ENCODE measurements at regions of chr2 and their contacts with region 1.

Region 1: DNA sequence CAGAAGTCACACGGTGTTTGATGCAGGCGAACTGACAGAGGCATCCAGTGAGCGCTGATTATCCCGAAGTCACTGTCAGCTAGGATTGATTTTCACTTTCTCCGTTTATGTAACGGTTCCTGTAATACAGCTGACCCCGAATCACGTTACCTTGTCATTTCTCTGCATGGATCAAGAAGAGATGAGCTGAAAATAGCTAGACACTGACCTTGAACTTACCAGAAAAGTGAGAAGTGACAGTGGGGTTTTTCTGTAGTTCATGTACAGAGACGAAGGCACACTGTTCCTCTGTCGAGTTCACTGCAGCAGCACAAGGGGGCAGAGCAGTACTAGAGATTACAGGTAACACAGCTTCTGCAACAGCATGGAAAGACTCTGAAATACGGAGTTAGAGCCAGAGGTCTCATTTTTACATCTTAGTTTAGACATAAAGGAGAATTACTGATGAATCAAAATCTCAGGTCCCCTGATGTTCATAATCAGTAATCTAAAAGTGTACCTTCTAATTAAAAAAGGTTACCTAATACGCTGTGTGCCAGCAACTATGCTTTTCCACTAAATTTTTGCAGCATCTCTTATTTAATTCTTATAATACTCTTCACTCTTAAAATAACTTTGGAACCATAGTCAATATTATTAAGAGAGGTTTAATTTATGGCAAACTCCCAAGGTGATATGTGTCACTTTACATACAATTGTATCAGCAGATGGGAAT is 33.1 kb downstream of the ARHGAP15 start:
- DNase-seq: no peak
- H3K4me3 ChIP-seq: no peak overlapping the region
- H3K27ac ChIP-seq: no peak overlapping the region
- H3K4me1 ChIP-seq: no peaks in the 10 kb centered on the region
- H3K27me3 ChIP-seq: no peaks in the 10 kb centered on the region
- CTCF ChIP-seq: peak; percentile 63 to 86 (median 83)
- EP300 ChIP-seq: no peak
- POLR2A ChIP-seq: no peak
- RAD21 ChIP-seq: peak; percentile 92 to 93

Region 2: GRCh38 chr2:143148757-143149156 is 13.5 kb before region 1 on chr2:
- CTCF ChIA-PET with region 1: interaction called, 10 read pairs
- POLR2A ChIA-PET with region 1: no interaction called
- DNase-seq: no peak
- H3K4me3 ChIP-seq: no peak overlapping the region
- H3K27ac ChIP-seq: no peak overlapping the region
- H3K4me1 ChIP-seq: no peaks in the 10 kb centered on the region
- H3K27me3 ChIP-seq: no peaks in the 10 kb centered on the region
- CTCF ChIP-seq: no peak
- EP300 ChIP-seq: no peak
- POLR2A ChIP-seq: no peak
- RAD21 ChIP-seq: no peak

Region 3: GRCh38 chr2:143217512-143218115 is 55.3 kb after region 1 on chr2:
- CTCF ChIA-PET with region 1: interaction called, 14 read pairs
- POLR2A ChIA-PET with region 1: no interaction called
- DNase-seq: no peak
- H3K4me3 ChIP-seq: no peak overlapping the region
- H3K27ac ChIP-seq: no peak overlapping the region
- H3K4me1 ChIP-seq: no peaks in the 10 kb centered on the region
- H3K27me3 ChIP-seq: no peaks in the 10 kb centered on the region
- CTCF ChIP-seq: no peak
- EP300 ChIP-seq: no peak
- POLR2A ChIP-seq: no peak
- RAD21 ChIP-seq: no peak

Region 4: DNA sequence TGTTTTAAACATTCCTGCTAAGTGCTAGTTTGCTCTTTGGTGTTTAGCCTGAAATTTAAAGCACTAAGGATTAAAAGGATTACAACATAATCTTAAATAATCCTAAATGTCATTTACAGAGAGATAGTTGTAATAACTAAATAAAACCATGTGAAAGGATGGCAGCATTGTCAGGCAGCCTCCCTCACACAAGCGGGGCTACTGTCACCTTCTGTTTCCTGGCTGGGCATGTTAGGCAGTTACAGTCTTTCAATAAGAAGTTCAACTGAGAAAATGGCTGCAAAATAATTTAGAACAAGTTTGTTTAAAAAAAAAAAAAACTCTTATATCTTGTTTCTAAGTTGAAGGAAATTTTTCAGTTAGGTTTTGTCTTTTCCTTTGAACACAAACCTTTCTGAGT is 91.8 kb after region 1 on chr2:
- CTCF ChIA-PET with region 1: interaction called, 164 read pairs
- POLR2A ChIA-PET with region 1: interaction called, 3 read pairs
- DNase-seq: no peak
- H3K4me3 ChIP-seq: no peak overlapping the region
- H3K27ac ChIP-seq: no peak overlapping the region
- H3K4me1 ChIP-seq: peaks cover 0 to 4% (median 0%) of the 10 kb centered on the region in 4 experiments; a peak in 1 of 7 replicates
- H3K27me3 ChIP-seq: peaks cover 0 to 1% (median 0%) of the 10 kb centered on the region in 4 experiments; a peak in 1 of 7 replicates
- CTCF ChIP-seq: no peak
- EP300 ChIP-seq: no peak
- POLR2A ChIP-seq: no peak
- RAD21 ChIP-seq: no peak

Region 5: DNA sequence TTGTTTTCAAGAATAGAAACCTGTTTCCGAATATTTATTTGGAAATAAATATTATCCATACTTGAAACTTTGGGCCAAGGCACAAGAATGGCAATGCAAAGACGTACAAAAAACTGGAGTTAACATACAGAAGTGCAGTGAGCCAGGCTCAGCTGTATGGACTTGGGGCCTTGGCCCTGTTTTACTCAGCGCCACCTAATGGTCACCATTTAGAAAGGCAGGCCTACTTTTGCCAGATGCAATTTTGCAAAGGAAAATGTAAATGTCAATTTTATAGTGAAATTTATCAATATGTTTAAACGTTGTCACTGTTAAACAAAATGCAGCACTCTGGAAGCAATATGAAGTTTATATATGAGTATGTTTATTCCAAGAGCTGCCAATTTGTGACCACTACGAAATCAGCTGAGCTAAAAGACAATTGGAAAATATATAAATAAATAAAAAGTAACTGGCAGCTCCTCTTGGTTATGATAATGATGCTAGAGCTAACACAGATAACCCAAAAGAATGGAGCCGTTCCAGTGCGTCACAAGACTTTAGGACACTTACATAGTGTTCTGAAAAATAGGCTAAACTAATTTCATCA is 121.9 kb after region 1 on chr2:
- CTCF ChIA-PET with region 1: interaction called, 40 read pairs
- POLR2A ChIA-PET with region 1: no interaction called
- DNase-seq: no peak
- H3K4me3 ChIP-seq: no peak overlapping the region
- H3K27ac ChIP-seq: no peak overlapping the region
- H3K4me1 ChIP-seq: no peaks in the 10 kb centered on the region
- H3K27me3 ChIP-seq: no peaks in the 10 kb centered on the region
- CTCF ChIP-seq: peak; percentile 60 to 77 (median 63)
- EP300 ChIP-seq: no peak
- POLR2A ChIP-seq: no peak
- RAD21 ChIP-seq: peak; percentile 44 to 62